Right lobe of liver (tissue), 6 donors: ENCODE measurements at regions of chr1 and their contacts with region 1.

Region 1: DNA sequence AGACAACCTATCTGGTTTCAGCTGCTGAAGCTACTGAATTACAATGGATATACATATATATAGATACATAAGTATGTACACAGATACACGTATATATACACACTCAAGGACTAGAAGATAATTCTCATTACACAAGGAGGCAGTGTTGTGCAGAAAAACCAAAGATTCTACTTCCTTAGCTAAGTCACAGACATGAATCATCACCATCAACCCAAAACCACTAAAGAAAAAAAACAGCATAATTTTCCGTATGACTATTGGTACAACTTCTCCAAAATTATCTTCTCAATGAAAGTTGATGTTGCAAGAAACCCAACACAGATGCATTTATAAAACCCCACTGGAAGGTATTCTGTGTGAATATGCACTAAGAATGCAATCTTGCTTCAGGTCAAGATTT is 36.8 kb upstream of the RPF1 start:
- DNase-seq: no peak
- ATAC-seq: peak; percentile 87 to 98 (median 90)
- H3K4me3 ChIP-seq: no peak overlapping the region
- H3K27ac ChIP-seq: no peak overlapping the region
- H3K4me1 ChIP-seq: no peaks in the 10 kb centered on the region
- H3K27me3 ChIP-seq: no peaks in the 10 kb centered on the region
- CTCF ChIP-seq: peak; percentile 48 to 59 (median 56)
- POLR2A ChIP-seq: no peak

Region 2: DNA sequence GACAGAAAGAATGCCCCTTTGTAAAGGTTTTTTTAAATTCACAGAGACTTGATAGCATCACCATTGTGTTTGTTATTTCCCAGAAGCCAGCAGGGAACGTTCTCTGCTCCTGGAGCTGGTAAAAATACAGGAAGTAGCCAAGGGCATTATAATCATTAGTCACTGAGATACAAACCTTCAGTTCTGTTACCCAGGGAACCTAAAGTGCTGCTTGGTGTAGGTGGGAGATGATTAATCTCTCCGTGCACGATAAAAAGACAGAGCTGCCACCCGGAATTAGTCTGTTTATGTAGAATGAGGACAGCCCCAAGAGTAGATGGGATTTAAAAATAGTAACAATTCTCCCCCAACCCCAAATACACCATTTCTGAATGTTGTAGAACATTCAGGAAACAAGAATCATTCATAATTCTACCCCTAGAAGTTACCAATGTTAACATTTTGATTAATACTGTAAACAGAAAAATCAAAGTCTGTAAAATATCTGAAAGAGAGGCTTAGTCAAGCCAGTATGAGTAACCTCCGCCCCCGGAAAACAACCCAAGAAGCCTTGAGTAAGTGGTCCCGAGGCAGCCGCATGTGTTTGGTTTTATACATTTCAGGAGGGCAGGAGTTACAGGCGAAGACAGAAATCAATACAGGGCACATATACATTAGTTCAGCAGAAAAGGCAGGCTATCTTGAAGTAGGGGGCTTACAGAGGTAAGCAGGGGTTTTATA is 177.3 kb after region 1 on chr1:
- intact Hi-C with region 1: loop called in 1 of 2 experiments (anchors 5 kb)
- DNase-seq: no peak
- ATAC-seq: peak; percentile 19 to 64 (median 42)
- H3K4me3 ChIP-seq: no peak overlapping the region
- H3K27ac ChIP-seq: peak overlapping the region in 1 of 3 donors; percentile 8
- H3K4me1 ChIP-seq: no peaks in the 10 kb centered on the region
- H3K27me3 ChIP-seq: no peaks in the 10 kb centered on the region
- CTCF ChIP-seq: no peak
- POLR2A ChIP-seq: no peak

Region 3: GRCh38 chr1:84653130-84653677 is 210.9 kb after region 1 on chr1:
- intact Hi-C with region 1: no loop called
- DNase-seq: no peak
- ATAC-seq: peak in 2 of 4 donors; percentile 30 to 38
- H3K4me3 ChIP-seq: no peak overlapping the region
- H3K27ac ChIP-seq: no peak overlapping the region
- H3K4me1 ChIP-seq: no peaks in the 10 kb centered on the region
- H3K27me3 ChIP-seq: no peaks in the 10 kb centered on the region
- CTCF ChIP-seq: peak; percentile 10 to 20 (median 14)
- POLR2A ChIP-seq: no peak

Region 4: DNA sequence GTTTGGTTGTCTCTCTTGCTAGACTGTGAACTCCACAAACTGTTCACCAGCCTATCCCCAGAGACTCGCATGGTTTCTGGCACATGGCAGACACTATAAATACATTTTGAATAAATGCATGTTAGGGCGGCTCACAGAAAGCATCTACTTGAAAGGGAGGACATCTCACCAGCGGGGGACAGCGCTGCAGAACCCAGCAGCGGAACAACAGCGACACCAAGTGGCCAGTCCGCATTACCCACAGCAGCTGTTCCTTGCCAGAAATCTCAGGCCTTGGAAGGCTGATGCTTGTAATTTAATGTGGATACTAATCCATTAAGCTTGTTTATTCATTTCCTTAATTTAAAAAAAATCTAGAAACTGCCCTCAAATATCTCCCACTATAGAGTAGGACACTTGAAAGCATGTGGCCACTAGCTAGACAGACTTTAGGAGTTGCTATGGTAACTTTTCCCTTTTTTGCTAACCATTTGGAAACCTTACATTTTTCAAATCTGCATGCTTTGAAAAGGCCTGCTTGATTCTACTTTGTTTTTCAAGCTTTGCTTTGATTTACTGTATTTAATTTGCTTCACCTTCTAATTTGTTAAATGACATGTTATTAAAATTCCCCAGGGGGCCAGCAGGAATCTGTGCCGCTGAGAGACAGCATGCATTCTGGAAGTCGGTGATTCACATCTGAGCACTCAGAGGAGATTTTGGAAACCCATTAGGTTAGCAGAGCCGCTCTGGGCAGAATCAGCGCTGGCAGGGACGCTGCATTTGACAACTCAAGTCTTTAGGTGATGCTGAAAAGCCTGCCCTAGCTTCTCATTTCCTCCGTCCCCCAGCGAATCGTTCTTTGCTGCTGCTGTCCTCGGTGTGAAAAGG is 311.5 kb after region 1 on chr1:
- intact Hi-C with region 1: loop called in 1 of 2 experiments (anchors 10 kb)
- DNase-seq: peak; percentile 75 to 79 (median 76)
- ATAC-seq: peak; percentile 94 to 99 (median 98)
- H3K4me3 ChIP-seq: no peak overlapping the region
- H3K27ac ChIP-seq: no peak overlapping the region
- H3K4me1 ChIP-seq: no peaks in the 10 kb centered on the region
- H3K27me3 ChIP-seq: no peaks in the 10 kb centered on the region
- CTCF ChIP-seq: peak; percentile 88 to 97 (median 96)
- POLR2A ChIP-seq: no peak